Psoas muscle (tissue), 8 donors: ENCODE measurements at regions of chr1 and their contacts with region 1.

Region 1: DNA sequence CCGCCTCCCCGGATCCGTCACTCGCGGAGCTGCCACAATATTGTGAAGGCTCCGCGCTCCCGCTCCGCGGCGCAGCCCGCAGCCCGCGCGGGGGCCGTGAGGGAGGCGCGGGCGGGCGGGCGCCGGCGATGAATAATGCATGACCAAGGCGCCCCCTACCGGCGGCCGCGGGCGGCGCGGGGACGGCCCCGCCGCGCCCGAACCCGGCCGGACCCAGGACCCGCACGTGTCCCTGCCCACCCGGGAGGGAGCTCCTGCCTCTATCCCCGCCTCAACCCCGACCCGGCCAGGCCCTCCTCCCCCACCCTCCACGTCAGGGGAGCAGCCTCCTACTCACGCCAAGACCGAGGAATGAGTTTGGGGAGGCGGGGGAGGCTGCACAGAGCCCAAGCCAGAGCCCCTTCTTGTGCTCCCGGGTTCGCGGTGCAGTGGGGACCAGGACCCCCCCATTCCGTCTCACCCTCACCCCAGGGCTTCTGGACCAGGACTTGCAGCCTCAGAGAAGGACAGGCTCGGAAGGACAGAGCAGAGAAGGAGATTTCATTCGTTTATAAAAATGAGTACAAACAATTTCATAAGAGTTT is 70.8 kb upstream of the CASZ1 start:
- DNase-seq: peak; percentile 72 to 83
- ATAC-seq: peak; percentile 81 to 87 (median 82)
- H3K4me3 ChIP-seq: peak overlapping the region; percentile 60
- H3K27ac ChIP-seq: no peak overlapping the region
- H3K4me1 ChIP-seq: peaks cover 17% of the 10 kb centered on the region
- H3K27me3 ChIP-seq: peaks cover 0 to 1% (median 0%) of the 10 kb centered on the region in 3 donors
- CTCF ChIP-seq: peak; percentile 91

Region 2: DNA sequence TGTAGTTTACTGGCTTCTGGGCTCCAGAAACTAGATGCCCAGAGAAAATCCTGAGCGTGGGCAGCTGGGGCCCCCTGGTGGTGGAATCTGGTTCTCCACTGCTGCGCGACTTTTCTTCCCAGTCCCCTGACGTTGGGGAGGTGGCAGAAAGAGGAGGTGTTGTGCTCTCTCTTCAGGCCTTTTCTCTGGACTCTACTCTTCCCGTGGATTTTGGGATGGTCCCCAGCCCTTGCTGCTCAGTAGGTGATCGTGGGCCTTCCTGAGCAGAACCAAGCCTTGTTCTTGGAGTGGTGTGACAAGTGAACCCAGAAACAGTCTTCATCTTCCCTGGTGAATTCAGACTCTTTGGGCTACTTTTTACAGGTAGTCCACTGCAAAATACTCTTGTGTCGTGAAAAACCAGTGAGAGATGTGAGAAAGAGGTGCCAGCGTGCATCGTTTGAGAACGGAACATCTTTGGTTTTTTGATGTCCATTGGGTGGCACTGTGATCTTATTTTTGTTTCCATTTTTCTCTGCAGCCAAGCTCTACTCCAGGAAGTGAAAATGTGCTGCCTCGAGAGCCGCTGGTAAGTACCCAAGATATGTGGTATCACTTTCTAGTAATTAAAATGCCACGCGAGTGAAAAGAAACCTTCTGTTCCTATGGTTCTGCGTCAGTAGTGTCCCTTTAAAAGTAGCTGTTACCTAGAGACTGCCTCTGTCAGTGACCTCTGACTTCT is 372.3 kb before region 1 on chr1:
- intact Hi-C with region 1: loop called in 1 of 2 experiments (anchors 5 kb)
- DNase-seq: peak; percentile 74 to 78
- ATAC-seq: peak; percentile 76 to 94 (median 83)
- H3K4me3 ChIP-seq: no peak overlapping the region
- H3K27ac ChIP-seq: peak overlapping the region; percentile 68
- H3K4me1 ChIP-seq: peaks cover 18% of the 10 kb centered on the region
- H3K27me3 ChIP-seq: no peaks in the 10 kb centered on the region
- CTCF ChIP-seq: peak; percentile 85

Region 3: GRCh38 chr1:10507111-10507879 is 359.9 kb before region 1 on chr1:
- intact Hi-C with region 1: loop called in 1 of 2 experiments (anchors 5 kb)
- DNase-seq: peak; percentile 61 to 81
- ATAC-seq: peak; percentile 74 to 82 (median 78)
- H3K4me3 ChIP-seq: no peak overlapping the region
- H3K27ac ChIP-seq: no peak overlapping the region
- H3K4me1 ChIP-seq: peaks cover 46% of the 10 kb centered on the region
- H3K27me3 ChIP-seq: no peaks in the 10 kb centered on the region
- CTCF ChIP-seq: peak; percentile 87

Region 4: DNA sequence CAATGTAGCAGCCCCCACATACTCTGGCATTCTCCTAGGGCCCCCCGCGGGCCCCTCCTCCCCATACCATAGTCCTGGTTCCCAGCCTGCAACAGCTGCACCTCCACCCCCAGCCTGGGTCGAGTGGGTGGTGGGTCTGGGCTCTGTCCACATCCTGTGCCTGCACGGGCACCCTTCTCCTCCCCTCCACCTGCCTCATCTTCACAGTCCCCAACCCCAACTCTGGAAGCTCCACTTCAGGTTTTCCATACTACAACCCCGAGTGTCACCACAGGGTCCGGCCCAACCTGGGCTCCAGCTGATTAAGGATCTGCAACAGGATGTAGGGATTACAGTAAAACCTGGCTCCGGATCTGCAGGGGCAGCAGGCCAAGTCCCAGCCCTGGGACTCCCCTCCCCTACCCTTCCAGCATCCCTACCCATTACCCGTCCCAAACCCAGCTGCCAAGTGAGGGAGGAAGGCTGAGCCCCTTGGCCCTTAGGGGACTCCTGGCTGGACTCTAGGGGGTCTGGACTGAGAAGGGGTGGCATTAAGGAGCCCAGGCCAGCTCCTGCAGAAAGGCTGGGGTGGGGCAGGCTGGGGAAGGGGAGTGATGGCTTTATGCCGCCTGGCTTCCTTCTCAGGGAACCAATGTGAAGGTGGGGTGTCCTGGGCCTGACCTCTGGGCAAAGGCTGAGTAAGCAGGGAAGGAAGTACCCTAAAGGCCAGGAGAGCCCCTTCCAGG is 187.6 kb before region 1 on chr1:
- intact Hi-C with region 1: loop called (anchors 10 kb)
- DNase-seq: no peak
- ATAC-seq: peak in 3 of 4 donors; percentile 16 to 28 (median 21)
- H3K4me3 ChIP-seq: no peak overlapping the region
- H3K27ac ChIP-seq: peak overlapping the region; percentile 36
- H3K4me1 ChIP-seq: peaks cover 82% of the 10 kb centered on the region
- H3K27me3 ChIP-seq: no peaks in the 10 kb centered on the region
- CTCF ChIP-seq: no peak